ENCODE measurements at regions of chr12 and their contacts with region 1.

Region 1: DNA sequence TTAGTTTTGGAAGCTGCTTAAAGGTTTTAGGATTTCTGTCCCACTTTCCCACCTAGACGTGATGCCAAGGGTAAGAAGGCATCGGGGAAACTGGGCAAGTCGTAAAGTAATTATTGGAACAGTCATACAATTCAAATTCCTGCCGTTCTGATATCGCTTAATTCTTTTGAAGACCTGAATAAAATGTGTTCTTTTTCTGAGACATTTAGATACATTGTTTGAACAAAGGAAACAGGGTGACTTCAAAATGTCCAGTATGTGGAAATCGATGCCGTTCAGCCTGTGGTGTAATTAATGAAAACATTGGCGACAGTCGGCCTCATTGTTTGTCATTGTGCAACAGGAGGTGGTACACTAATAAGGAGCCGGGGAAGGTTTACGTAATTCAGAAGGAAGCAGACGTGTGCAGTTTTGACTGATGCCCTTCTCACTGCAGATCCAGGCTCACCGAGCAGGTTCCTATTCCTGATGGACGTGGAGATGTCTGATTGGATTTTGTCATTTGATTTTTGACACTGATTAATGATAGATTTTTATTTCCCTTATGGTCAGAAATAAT is 92.7 kb downstream of the BORCS5 start:
- DNase-seq: no peak
- ATAC-seq: peak in 2 of 4 donors; percentile 59 to 74
- H3K4me3 ChIP-seq: no peak overlapping the region
- H3K27ac ChIP-seq: no peak overlapping the region
- H3K4me1 ChIP-seq: peaks cover 0 to 17% (median 0%) of the 10 kb centered on the region in 12 donors
- H3K27me3 ChIP-seq: no peaks in the 10 kb centered on the region
- CTCF ChIP-seq: no peak
- POLR2A ChIP-seq: no peak

Region 2: DNA sequence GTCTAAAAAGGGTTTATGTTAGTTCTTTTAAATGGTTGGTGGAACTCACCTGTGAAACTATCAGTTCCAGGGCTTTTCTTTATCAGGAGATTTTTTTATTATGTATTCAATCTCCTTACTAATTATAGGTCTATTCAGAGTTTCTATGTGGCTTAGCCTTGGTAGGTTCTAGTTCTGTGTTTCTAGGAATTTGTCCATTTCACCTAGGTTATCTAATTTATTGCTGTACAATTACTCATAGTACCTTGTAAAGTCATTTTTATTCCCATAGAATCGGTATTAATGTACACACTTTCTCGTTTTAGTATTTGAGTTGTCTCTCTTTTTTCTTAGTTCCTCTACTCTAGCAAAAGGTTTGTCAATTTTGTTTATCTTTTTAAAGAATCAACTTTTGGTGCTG is 33.7 kb before region 1 on chr12:
- intact Hi-C with region 1: loop called in 1 of 10 experiments (anchors 5 kb)
- DNase-seq: no peak
- ATAC-seq: no peak
- H3K4me3 ChIP-seq: no peak overlapping the region
- H3K27ac ChIP-seq: no peak overlapping the region
- H3K4me1 ChIP-seq: no peaks in the 10 kb centered on the region
- H3K27me3 ChIP-seq: no peaks in the 10 kb centered on the region
- CTCF ChIP-seq: no peak
- POLR2A ChIP-seq: no peak

Region 3: DNA sequence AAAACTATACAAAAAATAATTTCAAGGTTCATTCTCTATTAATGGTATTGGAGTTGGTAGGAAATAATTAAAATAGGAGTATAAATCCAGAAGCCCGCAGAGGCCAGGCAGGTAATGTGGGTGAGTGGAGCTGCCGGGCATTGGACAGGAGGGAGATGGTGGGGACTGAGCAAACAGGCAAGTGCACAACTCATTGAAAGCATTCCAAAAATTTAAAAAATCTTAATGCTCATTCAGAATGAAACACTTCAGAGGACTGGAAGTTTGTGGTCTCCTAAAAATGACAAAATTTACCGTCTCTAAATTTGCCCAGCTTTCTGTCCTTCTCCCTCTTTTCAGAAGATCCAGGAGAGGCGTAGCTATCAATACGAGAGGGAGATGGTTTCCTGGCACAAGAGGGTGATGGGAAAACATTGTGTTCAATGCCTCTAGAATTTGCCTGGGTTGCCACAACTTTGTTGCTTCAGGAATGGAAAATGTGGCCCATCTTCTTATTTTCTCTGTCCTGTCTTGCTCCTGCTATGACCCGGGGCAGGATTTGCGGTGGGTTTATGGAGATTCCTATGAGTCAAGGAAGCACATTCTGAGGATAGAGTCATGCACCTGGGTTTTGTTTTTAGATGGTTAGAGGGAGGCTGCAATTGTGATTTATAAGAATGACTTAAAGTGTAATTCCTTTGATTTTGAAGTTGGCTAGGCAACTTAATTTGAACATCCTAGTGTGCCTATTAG is 20.5 kb before region 1 on chr12:
- intact Hi-C with region 1: no loop called
- DNase-seq: no peak
- ATAC-seq: no peak
- H3K4me3 ChIP-seq: no peak overlapping the region
- H3K27ac ChIP-seq: no peak overlapping the region
- H3K4me1 ChIP-seq: peaks cover 0 to 16% (median 3%) of the 10 kb centered on the region in 12 donors
- H3K27me3 ChIP-seq: no peaks in the 10 kb centered on the region
- CTCF ChIP-seq: no peak
- POLR2A ChIP-seq: no peak

Measured in heart left ventricle (tissue), 16 donors.